ENCODE measurements at regions of chr11 and their contacts with region 1.

Region 1: DNA sequence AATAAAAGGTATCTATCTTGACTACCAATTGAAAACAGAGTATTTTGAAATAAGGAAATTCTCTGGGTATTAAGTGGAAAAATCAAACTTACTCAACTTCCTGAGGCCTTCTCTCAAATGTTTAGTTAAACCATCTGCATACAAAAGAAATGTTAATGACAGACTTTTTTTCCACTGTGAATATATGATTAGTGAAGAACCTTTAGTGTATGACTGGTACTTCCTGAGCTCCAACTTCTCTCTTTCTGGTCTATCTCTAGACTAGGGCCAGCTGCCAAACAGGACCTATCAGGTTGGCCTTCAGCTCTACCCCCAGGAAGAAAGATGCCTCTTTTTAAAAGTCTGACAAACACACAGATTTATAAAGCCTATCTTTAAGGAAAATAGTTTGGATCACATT is 68.8 kb upstream of the SCUBE2 start:
- DNase-seq: no peak
- ATAC-seq: peak; percentile 39
- H3K4me3 ChIP-seq: no peak overlapping the region
- H3K27ac ChIP-seq: peak overlapping the region; percentile 10 to 61
- H3K4me1 ChIP-seq: peaks cover 0 to 34% of the 10 kb centered on the region in 2 donors
- H3K27me3 ChIP-seq: no peaks in the 10 kb centered on the region
- CTCF ChIP-seq: no peak

Region 2: DNA sequence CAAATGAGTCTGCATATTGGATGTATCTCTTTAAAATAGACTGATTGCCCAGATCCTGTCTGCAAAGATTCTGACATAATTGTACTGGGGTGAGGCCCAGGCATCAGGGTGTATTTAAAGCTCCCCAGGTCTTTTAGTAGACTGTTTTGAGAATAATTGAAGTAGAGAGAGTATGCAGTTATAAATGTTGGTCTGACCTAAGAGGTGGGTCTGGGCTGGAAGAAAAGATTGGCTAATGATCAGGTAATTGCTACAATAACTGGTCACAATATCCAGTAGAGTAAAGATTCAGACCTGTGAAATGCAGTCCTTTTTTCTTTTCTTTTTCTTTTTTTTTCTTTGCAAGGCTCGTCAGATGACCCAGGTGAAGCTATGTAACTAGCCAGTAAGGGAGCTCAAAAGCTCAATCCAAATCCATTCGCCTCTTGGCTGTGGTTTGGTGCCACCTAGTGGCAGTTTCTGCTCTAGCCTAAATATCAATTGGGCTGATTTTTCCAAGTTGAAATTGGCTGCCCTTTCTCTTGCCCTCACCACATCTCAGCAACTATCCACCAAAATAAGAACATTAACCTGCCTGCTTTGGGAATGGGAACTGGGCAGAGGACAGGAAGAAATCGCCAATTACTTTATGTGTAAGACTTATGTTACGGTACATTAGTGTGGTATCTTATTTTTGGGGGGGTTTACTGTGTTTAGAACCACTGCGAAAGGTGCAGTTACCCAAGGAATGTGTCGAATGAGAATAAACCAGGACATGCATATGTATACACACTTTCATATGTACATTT is 346.5 kb after region 1 on chr11:
- intact Hi-C with region 1: loop called in 1 of 2 experiments (anchors 10 kb)
- DNase-seq: peak in 3 of 4 donors; percentile 59 to 85 (median 60)
- ATAC-seq: peak; percentile 98
- H3K4me3 ChIP-seq: no peak overlapping the region
- H3K27ac ChIP-seq: no peak overlapping the region
- H3K4me1 ChIP-seq: peaks cover 0 to 5% of the 10 kb centered on the region in 2 donors
- H3K27me3 ChIP-seq: no peaks in the 10 kb centered on the region
- CTCF ChIP-seq: peak; percentile 74 to 97

Measured in left lung (tissue), 14 donors.